ENCODE measurements at regions of chr14 and their contacts with region 1.

Region 1: GRCh38 chr14:23478111-23478759 is 8.7 kb downstream of the NGDN start:
- DNase-seq: peak in 6 of 10 donors; percentile 49 to 75 (median 60)
- H3K4me3 ChIP-seq: no peak overlapping the region
- H3K27ac ChIP-seq: no peak overlapping the region
- H3K27me3 ChIP-seq: no peaks in the 10 kb centered on the region
- CTCF ChIP-seq: peak; percentile 68 to 94 (median 83)

Region 2: GRCh38 chr14:23545740-23546365 is 67.6 kb after region 1 on chr14:
- intact Hi-C with region 1: no loop called
- DNase-seq: no peak
- H3K4me3 ChIP-seq: no peak overlapping the region
- H3K27ac ChIP-seq: peak overlapping the region in 52 of 59 donors; percentile 4 to 93 (median 80)
- H3K27me3 ChIP-seq: no peaks in the 10 kb centered on the region
- CTCF ChIP-seq: no peak

Region 3: GRCh38 chr14:23555882-23556699 is 77.9 kb after region 1 on chr14 and contains the start of gene THTPA:
- intact Hi-C with region 1: loop called (anchors 2 kb)
- DNase-seq: peak; percentile 90 to 96 (median 94)
- H3K4me3 ChIP-seq: peak within 1 kb of the TSS; percentile 56 to 100 (median 91)
- H3K27ac ChIP-seq: peak within 1 kb of the TSS; percentile 90 to 100 (median 99)
- H3K27me3 ChIP-seq: no peaks in the 10 kb centered on the region
- CTCF ChIP-seq: peak in 32 of 56 donors; percentile 4 to 52 (median 30)
- total RNA-seq, gene THTPA: 20.2 to 54.1 (median 34.9) TPM

Region 4: GRCh38 chr14:23562268-23563203 is 84.3 kb after region 1 on chr14:
- intact Hi-C with region 1: loop called (anchors 1 to 2 kb)
- DNase-seq: peak in 5 of 10 donors; percentile 61 to 76 (median 68)
- H3K4me3 ChIP-seq: no peak overlapping the region
- H3K27ac ChIP-seq: peak overlapping the region in 55 of 59 donors; percentile 7 to 84 (median 64)
- H3K27me3 ChIP-seq: no peaks in the 10 kb centered on the region
- CTCF ChIP-seq: peak; percentile 88 to 99 (median 94)

Region 5: DNA sequence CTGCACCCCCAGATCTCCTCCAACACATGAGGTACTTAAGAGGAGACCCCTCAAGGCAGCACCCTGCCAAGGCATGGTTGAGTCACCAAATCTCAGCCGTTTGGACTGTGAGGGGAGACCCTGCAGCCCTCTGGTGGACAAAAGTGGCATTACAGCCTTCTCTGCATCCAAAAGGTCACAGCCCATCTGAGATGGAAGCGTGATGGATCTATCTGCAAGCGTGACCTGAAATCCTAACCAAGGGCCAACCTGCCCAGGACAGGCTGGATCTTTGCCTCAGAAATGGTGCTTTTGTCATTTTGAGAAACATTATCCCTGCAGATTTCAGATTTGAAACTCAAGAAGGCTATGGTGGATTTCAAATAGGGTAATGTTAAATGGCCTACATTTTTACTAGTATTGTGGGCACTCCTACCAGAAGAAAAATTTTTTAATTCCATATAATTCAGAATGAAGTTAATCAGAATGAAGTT is 451.6 kb after region 1 on chr14:
- intact Hi-C with region 1: loop called in 1 of 2 experiments (anchors 10 kb)
- DNase-seq: peak; percentile 63 to 89 (median 82)
- H3K4me3 ChIP-seq: peak overlapping the region in 44 of 59 donors; percentile 1 to 55 (median 30)
- H3K27ac ChIP-seq: peak overlapping the region in 10 of 59 donors; percentile 9 to 49 (median 35)
- H3K27me3 ChIP-seq: no peaks in the 10 kb centered on the region
- CTCF ChIP-seq: peak; percentile 87 to 99 (median 92)

Measured in dorsolateral prefrontal cortex (tissue), 120 donors.